A549 (cell line): ENCODE measurements at regions of chr6 and their contacts with region 1.

Region 1: GRCh38 chr6:75208298-75209183 is 2.7 kb upstream of the COL12A1 start:
- DNase-seq: peak; percentile 49 to 62
- ATAC-seq: peak; percentile 36 to 77
- H3K4me3 ChIP-seq: 0 out of 3 replicates have a peak overlapping the region, but pooled peaks have one; percentile 11
- H3K27ac ChIP-seq: 0 out of 6 replicates have a peak overlapping the region, but pooled peaks of 1 of the 2 experiments have one; percentile 48
- H3K4me1 ChIP-seq: peaks cover 10% of the 10 kb centered on the region; the same call in 2 of the 3 replicates
- CTCF ChIP-seq: peak; percentile 83
- EP300 ChIP-seq: no peak
- POLR2A ChIP-seq: no peak
- RAD21 ChIP-seq: peak; percentile 93

Region 2: DNA sequence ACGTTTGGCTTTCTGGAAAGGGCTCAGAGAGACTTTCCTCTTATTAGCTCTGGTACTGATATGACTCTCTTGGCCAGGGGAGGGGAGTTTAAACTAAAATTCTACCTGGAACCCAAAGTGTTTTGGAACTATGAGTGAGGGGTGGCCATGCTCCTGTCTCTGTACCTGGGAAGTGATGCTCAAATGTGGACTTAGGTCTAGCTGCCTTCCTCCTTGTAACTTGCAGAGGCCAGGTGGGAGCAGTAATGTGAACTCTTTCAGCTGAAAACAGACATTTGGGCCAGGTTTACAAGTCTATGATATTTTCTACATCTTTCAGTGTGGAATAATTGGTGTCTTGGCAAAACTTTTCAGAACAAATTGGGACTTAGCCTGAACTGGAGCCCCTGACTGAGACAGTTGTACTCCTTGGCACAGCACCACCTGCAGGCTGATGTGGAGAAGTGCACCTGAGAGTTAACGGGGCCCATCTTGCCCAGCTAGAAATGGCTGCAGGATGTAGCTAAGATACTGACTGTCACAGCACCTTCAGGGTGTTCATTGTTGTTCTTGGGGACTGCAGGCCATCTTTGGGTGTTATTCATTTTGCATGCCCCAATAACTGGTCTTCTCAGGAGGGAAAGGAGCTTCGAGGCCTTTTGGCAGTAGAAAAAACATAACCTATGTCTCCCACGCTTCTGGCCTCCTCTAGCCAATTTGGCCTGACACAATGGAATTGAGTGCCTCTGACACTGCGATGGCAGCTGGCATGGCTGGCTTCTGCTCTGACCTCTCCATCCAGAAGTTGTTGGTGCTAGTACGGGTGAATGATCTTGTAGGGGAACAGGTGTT is 1475.5 kb before region 1 on chr6:
- CTCF ChIA-PET with region 1: interaction called, 86 read pairs
- POLR2A ChIA-PET with region 1: no interaction called
- DNase-seq: peak; percentile 25 to 66
- ATAC-seq: peak; percentile 96 to 97
- H3K4me3 ChIP-seq: no peak overlapping the region
- H3K27ac ChIP-seq: peak overlapping the region in 1 of 2 experiments; percentile 44; a peak in 1 of 6 replicates
- H3K4me1 ChIP-seq: peaks cover 4% of the 10 kb centered on the region; the same call in 1 of the 3 replicates
- CTCF ChIP-seq: peak; percentile 71
- EP300 ChIP-seq: no peak
- POLR2A ChIP-seq: no peak
- RAD21 ChIP-seq: peak; percentile 76 to 79

Region 3: DNA sequence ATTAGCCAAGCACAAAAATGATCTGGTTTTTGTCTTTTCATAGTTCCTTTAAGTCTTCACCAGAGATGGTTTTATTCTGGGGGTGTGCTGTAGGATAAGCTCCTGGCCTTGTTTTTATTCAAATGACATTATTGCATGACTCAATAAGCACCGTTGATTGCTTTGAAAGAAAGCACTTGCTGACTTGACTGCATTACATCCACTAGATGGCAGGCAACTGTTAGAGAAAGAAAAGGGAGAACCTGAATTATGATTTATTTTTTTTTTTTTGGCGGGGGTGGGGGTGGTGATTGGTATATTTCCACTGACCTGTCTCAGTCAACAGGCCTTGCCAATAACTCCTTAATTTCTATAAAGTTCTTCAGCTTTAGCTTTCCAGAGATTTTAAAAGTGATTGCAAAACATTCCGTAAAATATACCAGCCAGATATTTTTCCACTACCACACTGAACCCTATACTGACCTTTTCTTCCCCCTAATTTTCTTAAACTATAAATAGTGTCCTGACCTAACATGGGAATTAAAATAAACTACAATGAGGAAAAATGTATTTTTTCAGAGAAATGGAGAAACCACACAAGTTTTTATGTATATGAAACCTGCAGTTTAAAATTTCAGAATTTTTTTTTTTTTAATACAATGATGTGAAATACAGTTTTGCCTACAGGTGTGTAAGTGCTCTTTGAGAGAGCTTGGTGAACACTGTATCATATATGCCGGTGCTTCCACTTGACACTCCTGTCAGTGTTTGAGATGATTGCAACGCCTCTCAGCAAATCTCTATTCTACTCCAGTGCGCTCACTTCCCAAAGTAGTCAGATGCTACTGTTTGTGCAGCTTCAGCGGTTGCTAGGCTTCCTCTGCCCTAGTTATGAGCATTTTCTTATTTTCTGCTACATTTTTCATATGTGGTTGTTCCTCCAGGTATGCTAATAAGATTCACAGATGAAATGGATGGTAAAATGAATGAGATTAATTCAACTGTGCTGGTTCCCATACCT is 1238.3 kb before region 1 on chr6:
- CTCF ChIA-PET with region 1: interaction called, 46 read pairs
- POLR2A ChIA-PET with region 1: no interaction called
- DNase-seq: peak; percentile 10 to 40
- ATAC-seq: peak; percentile 47 to 53; a peak in 2 of 6 replicates
- H3K4me3 ChIP-seq: no peak overlapping the region
- H3K27ac ChIP-seq: peak overlapping the region in 1 of 2 experiments; percentile 45; a peak in 2 of 6 replicates
- H3K4me1 ChIP-seq: no peaks in the 10 kb centered on the region; the same call in 2 of the 3 replicates
- CTCF ChIP-seq: peak; percentile 70
- EP300 ChIP-seq: no peak
- POLR2A ChIP-seq: no peak
- RAD21 ChIP-seq: peak; percentile 66 to 76

Region 4: DNA sequence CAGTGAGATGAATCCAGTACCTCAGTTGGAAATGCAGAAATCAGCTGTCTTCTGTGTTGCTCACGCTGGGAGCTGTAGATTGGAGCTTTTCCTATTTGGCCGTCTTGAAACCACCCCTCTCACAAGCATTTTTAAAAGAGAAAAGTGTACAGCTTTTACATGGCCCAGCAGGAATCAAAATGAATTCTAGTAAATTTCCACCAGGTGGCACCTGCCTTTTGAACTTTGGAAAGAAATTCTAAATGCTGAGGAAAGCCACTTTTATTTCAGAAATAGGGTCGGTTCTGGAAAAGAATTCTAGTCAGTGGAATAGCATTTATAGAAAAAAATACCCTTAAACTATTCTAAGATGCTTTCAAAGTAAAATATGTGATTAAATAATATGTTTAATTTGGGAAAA is 864.7 kb before region 1 on chr6:
- CTCF ChIA-PET with region 1: interaction called, 10 read pairs
- POLR2A ChIA-PET with region 1: no interaction called
- DNase-seq: peak; percentile 1 to 2
- ATAC-seq: no peak
- H3K4me3 ChIP-seq: no peak overlapping the region
- H3K27ac ChIP-seq: no peak overlapping the region
- H3K4me1 ChIP-seq: no peaks in the 10 kb centered on the region
- CTCF ChIP-seq: peak; percentile 43
- EP300 ChIP-seq: no peak
- POLR2A ChIP-seq: no peak
- RAD21 ChIP-seq: peak; percentile 34 to 39; a peak in 2 of 5 replicates

Region 5: DNA sequence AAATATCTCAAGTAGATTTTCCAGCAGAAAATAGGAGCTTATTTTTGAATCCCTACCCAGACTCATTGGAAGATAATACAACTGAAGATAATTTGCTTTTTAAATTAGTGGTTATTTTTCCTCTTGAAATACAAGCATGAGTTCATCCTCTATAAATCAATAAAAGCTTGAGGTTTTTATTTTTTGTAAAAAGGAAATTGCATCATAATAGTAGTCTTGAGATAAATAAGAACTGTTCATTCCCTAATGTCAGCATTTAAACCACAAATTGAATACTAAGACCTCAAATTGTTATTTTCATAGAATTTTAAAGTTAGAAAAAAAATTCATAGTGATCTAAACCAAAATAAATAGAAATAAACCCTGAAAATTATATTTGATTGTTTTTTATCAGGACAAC is 793.5 kb before region 1 on chr6:
- CTCF ChIA-PET with region 1: interaction called, 54 read pairs
- POLR2A ChIA-PET with region 1: no interaction called
- DNase-seq: no peak
- ATAC-seq: no peak
- H3K4me3 ChIP-seq: no peak overlapping the region
- H3K27ac ChIP-seq: no peak overlapping the region
- H3K4me1 ChIP-seq: no peaks in the 10 kb centered on the region
- CTCF ChIP-seq: no peak
- EP300 ChIP-seq: no peak
- POLR2A ChIP-seq: no peak
- RAD21 ChIP-seq: no peak

Region 6: DNA sequence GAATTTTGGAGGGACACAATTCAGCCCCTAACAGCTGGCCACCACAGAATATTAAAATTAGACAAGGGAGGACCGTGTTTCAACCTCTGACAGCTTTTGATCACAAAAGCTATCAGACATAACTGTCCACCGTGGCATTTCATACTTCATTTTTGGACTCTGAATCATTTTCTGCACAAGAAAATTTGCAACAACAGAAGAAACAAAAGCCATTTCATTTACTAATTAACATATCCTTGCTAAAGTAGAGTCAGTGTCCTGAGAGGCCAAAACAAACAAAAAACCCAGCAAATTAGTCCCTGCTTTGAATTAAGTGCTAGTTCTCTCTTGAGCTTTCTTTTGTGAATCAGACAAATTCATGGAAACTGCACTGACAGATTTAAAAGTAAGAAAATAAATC is 14.9 kb after region 1 on chr6:
- CTCF ChIA-PET with region 1: interaction called, 58 read pairs
- POLR2A ChIA-PET with region 1: no interaction called
- DNase-seq: no peak
- ATAC-seq: no peak
- H3K4me3 ChIP-seq: no peak overlapping the region
- H3K27ac ChIP-seq: no peak overlapping the region
- H3K4me1 ChIP-seq: no peaks in the 10 kb centered on the region
- CTCF ChIP-seq: no peak
- EP300 ChIP-seq: no peak
- POLR2A ChIP-seq: no peak
- RAD21 ChIP-seq: no peak